Activated naive CD4-positive, alpha-beta T cell treated with anti-CD3 and anti-CD28 coated beads for 36 hours (primary cell): ENCODE measurements at regions of chr7 and their contacts with region 1.

Region 1: GRCh38 chr7:43647673-43648472 is 65.0 kb downstream of the STK17A start:
- DNase-seq: peak; percentile 87
- H3K4me3 Mint-ChIP-seq: peak overlapping the region; percentile 62
- H3K27ac Mint-ChIP-seq: peak overlapping the region; percentile 98
- H3K4me1 Mint-ChIP-seq: peaks cover 94% of the 10 kb centered on the region
- H3K27me3 Mint-ChIP-seq: no peaks in the 10 kb centered on the region

Region 2: GRCh38 chr7:43590862-43591550 is 56.9 kb before region 1 on chr7:
- CTCF ChIA-PET with region 1: interaction called, 172 read pairs
- intact Hi-C with region 1: loop called (anchors 1 kb)
- DNase-seq: peak; percentile 73
- H3K4me3 Mint-ChIP-seq: peak overlapping the region; percentile 37
- H3K27ac Mint-ChIP-seq: peak overlapping the region; percentile 39
- H3K4me1 Mint-ChIP-seq: peaks cover 81% of the 10 kb centered on the region
- H3K27me3 Mint-ChIP-seq: no peaks in the 10 kb centered on the region

Region 3: DNA sequence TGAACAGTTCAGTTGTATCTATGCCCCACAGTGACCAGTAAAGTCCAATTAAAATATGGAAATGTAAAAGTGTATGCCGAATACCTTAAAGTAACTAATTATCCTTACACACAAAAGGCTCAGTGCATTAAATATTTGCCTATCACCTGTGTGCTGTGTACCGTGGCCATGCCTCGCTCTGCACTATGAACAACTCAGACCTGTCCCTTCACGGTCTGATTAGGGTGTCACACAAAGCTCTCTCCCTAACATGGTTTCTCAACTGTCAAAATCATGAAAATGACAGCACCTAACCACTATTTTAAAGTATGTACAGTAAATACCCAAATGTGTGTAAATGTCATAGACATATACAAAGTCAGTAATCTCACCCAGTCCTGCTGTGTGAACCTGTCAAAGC is 21.9 kb before region 1 on chr7:
- CTCF ChIA-PET with region 1: interaction called, 8 read pairs
- intact Hi-C with region 1: loop called (anchors 1 kb)
- DNase-seq: no peak
- H3K4me3 Mint-ChIP-seq: no peak overlapping the region
- H3K27ac Mint-ChIP-seq: peak overlapping the region; percentile 66
- H3K4me1 Mint-ChIP-seq: peaks cover 90% of the 10 kb centered on the region
- H3K27me3 Mint-ChIP-seq: no peaks in the 10 kb centered on the region

Region 4: DNA sequence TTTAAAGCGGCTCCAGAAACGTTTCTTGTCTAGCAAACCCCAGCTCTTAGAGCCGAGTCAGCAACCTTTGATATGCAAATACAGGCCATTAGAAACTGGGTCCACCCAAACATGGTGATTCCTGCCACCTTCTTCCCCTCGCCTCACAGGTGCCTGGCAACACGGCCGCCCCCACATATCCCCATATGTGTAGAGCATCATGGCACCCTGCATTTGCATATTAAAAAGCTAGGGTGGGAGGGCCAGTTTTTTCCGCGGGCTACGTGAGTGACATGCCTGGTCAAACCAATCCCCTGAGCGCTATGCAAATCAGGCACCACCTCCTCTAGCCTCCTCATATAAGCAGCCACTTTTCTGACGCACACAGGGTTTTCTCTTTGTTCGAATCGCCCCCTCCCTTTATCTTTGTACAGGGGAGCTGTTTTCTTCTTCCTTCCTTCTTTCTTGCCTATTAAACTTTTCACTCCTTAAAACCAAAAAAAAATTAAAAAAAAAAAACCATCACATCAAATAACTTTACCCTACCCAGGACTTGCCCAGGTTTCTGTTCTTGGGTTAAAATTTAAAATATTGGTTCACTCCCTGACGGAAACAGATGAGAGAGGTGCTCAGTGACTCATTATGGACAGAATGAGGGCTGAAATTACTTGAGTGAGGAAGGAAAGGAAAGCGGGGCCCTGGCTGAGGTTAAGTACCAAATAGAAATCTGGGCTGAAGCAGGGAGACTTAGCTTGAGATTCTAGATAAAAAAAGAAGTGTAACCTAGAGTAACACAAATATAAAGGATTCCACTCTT is 21.6 kb after region 1 on chr7:
- CTCF ChIA-PET with region 1: interaction called, 7 read pairs
- intact Hi-C with region 1: loop called (anchors 1 kb)
- DNase-seq: peak; percentile 90
- H3K4me3 Mint-ChIP-seq: peak overlapping the region; percentile 71
- H3K27ac Mint-ChIP-seq: peak overlapping the region; percentile 96
- H3K4me1 Mint-ChIP-seq: peaks cover 87% of the 10 kb centered on the region
- H3K27me3 Mint-ChIP-seq: no peaks in the 10 kb centered on the region

Region 5: GRCh38 chr7:43735802-43736541 is 88.1 kb after region 1 on chr7:
- CTCF ChIA-PET with region 1: interaction called, 4 read pairs
- intact Hi-C with region 1: loop called (anchors 1 kb)
- DNase-seq: peak; percentile 86
- H3K4me3 Mint-ChIP-seq: no peak overlapping the region
- H3K27ac Mint-ChIP-seq: peak overlapping the region; percentile 75
- H3K4me1 Mint-ChIP-seq: peaks cover 22% of the 10 kb centered on the region
- H3K27me3 Mint-ChIP-seq: peaks cover 7% of the 10 kb centered on the region